ENCODE measurements at regions of chr15 and their contacts with region 1.

Region 1: GRCh38 chr15:22811640-22812039 is 25.2 kb downstream of the NIPA1 start:
- DNase-seq: no peak
- H3K4me3 ChIP-seq: no peak overlapping the region
- CTCF ChIP-seq: peak; percentile 48

Region 2: GRCh38 chr15:22799902-22800301 is 11.7 kb before region 1 on chr15:
- CTCF ChIA-PET with region 1: interaction called, 10 read pairs
- POLR2A ChIA-PET with region 1: no interaction called
- DNase-seq: no peak
- H3K4me3 ChIP-seq: no peak overlapping the region
- CTCF ChIP-seq: no peak

Region 3: GRCh38 chr15:22831473-22831872 is 19.8 kb after region 1 on chr15:
- CTCF ChIA-PET with region 1: no interaction called
- POLR2A ChIA-PET with region 1: no interaction called
- DNase-seq: no peak
- H3K4me3 ChIP-seq: no peak overlapping the region
- CTCF ChIP-seq: no peak

Region 4: DNA sequence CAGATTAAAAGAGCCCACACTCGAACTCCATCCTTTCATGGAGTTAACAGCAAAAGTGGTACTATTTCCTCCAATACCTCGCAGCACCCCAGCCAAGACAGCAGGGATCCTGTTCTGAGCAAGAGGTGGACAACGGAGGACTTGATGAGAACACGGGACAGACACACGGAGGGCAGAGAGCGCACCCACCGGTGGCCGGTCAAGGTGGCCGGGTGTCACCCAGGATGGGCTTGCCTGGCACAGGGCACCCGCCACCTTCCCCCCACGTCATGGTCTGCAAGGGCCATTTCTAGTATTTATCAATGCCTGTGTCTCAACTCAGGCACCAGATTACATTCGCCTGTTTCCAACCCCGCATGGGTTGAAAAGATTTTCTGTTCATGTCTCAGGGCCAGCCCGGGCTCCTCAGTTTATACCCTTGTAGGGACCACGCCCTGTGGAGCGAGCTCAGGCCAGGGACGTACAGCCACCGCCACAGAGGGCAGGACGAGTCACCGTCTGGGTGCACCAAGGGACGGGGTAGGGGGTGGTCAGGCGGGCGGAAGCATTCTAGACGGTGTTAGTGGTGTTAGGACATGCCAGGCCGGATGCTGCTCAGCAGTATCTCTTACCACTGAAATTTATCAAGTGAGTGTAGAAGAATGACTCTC is 104.4 kb after region 1 on chr15:
- CTCF ChIA-PET with region 1: no interaction called
- POLR2A ChIA-PET with region 1: no interaction called
- DNase-seq: no peak
- H3K4me3 ChIP-seq: no peak overlapping the region
- CTCF ChIP-seq: no peak